ENCODE measurements at regions of chr12 and their contacts with region 1.

Region 1: DNA sequence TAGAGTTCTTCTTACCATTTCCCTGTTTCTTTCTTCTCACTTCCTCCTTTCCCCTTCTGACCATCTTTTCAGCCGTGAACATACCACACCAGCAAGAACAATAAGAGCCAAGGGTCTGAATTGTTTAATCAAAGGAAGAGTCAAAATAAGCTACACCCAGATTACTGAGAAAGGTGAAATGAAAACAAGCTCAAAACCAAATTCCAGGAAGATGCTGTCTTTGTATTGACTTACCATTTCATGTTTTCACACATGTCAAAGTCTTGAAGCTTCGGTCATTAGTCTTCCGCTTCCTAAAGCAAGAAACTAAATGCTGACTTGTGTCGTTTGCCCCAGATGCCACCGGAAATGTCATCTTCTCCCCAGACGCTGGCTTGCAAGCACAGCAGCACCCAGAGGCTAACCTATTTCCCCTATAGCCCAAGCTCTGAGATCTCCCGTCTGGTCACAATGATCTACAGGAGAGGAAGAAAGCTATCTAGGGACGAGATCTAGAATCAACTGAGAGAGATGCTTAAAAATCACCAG is 136.5 kb upstream of the AMIGO2 start:
- DNase-seq: peak; percentile 72
- H3K4me3 Mint-ChIP-seq: peak overlapping the region; percentile 93
- H3K27ac Mint-ChIP-seq: peak overlapping the region; percentile 96
- H3K4me1 Mint-ChIP-seq: peaks cover 63% of the 10 kb centered on the region
- H3K27me3 Mint-ChIP-seq: no peaks in the 10 kb centered on the region

Region 2: DNA sequence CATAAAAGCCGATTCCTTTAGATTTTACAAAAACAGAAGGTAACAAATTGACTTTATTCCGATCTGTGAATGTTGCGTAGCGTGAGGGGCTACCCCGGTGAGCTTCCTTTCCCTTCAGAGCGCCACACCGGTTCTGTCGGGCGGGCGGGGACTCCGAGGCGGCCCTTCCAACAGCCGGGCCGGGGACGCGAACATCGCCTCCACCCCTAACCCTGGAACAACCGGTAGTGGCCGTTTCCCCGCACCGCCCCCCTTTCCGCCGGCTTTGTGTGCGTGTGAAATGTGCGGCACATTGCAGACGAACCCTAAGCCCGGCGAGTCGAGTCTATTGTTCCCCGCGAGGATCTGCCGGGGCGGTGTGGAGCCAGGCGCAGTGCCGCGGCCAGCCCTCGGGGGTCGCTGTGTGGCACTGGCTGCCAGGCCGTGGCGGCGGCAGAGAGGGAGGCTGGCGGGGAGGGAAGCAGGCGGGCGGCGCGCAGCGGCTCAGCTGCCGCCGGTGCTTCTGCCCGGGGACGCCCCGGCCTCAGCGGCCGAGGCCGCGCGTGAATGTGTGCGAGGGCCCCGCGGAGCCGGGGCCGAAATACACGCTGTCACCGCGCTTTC is 1487.5 kb before region 1 on chr12:
- intact Hi-C with region 1: loop called (anchors 5 kb)
- DNase-seq: peak; percentile 96
- H3K4me3 Mint-ChIP-seq: peak overlapping the region; percentile 99
- H3K27ac Mint-ChIP-seq: peak overlapping the region; percentile 100
- H3K4me1 Mint-ChIP-seq: peaks cover 40% of the 10 kb centered on the region
- H3K27me3 Mint-ChIP-seq: no peaks in the 10 kb centered on the region

Region 3: GRCh38 chr12:46382964-46383653 is 833.1 kb before region 1 on chr12:
- intact Hi-C with region 1: loop called (anchors 5 kb)
- DNase-seq: peak; percentile 95
- H3K4me3 Mint-ChIP-seq: peak overlapping the region; percentile 84
- H3K27ac Mint-ChIP-seq: peak overlapping the region; percentile 92
- H3K4me1 Mint-ChIP-seq: peaks cover 54% of the 10 kb centered on the region
- H3K27me3 Mint-ChIP-seq: no peaks in the 10 kb centered on the region

Region 4: DNA sequence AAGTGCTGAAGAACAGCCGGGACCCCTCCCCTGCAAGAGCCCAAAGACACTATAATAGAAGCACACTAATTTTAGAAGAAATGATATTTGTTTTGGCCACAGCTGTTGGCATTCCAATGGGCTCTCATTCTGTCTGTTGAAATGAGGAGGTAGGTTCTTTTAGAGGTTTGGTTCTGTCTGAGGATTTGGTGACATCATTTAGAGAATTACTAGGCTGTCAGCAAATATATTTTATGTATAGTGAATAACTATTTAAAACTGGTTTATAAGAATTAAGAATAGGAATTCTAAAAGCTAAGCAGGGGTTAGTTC is 642.9 kb before region 1 on chr12:
- intact Hi-C with region 1: no loop called
- DNase-seq: no peak
- H3K4me3 Mint-ChIP-seq: no peak overlapping the region
- H3K27ac Mint-ChIP-seq: no peak overlapping the region
- H3K4me1 Mint-ChIP-seq: no peaks in the 10 kb centered on the region
- H3K27me3 Mint-ChIP-seq: no peaks in the 10 kb centered on the region

Region 5: DNA sequence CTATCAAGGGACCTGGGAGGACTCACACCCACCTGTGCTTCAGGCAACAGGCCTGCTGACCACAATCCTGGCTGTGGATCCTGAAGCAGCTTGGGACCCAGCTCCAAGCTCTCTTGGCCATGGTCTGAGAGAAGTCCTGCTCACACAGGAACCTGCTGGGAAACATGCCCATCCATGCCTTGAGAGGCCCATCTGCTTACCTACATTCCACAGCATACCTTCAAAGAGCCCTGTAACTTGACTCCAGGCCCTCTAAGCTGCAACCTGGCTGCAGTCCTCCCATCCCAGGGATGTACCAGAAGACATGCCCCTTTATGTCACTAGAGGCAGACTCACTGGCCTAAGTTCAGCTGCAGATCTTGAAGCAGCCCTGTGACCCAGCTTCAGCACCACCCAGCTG is 74.7 kb before region 1 on chr12:
- intact Hi-C with region 1: no loop called
- DNase-seq: no peak
- H3K4me3 Mint-ChIP-seq: no peak overlapping the region
- H3K27ac Mint-ChIP-seq: no peak overlapping the region
- H3K4me1 Mint-ChIP-seq: peaks cover 21% of the 10 kb centered on the region
- H3K27me3 Mint-ChIP-seq: no peaks in the 10 kb centered on the region

Region 6: DNA sequence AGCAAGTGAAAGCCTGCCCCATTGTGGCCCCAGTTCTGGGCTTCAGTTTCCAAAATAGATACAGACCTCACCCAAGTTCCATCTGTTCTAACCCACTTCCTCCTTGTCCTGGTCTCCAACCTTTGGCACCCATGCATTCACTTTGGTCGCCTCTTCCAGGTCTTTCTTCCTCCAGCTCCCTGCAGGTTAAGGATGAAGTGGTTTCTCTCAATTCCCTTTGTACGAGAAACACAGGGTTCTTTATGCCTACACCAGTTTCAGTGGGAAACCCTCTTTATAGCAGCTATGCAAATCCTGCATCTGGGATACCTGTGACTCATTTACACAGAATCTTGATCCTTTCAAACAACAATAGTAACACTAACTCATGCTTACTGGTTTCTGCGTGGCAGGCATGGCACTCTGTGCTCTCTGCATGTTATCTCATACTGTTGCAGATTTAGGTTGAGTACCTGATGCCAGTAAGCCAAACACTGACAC is 25.9 kb before region 1 on chr12:
- intact Hi-C with region 1: loop called (anchors 1 kb)
- DNase-seq: no peak
- H3K4me3 Mint-ChIP-seq: peak overlapping the region; percentile 24
- H3K27ac Mint-ChIP-seq: peak overlapping the region; percentile 71
- H3K4me1 Mint-ChIP-seq: peaks cover 69% of the 10 kb centered on the region
- H3K27me3 Mint-ChIP-seq: no peaks in the 10 kb centered on the region

Region 7: GRCh38 chr12:47307680-47308399 is 91.6 kb after region 1 on chr12:
- intact Hi-C with region 1: loop called (anchors 1 kb)
- DNase-seq: peak; percentile 43
- H3K4me3 Mint-ChIP-seq: peak overlapping the region; percentile 91
- H3K27ac Mint-ChIP-seq: peak overlapping the region; percentile 87
- H3K4me1 Mint-ChIP-seq: peaks cover 69% of the 10 kb centered on the region
- H3K27me3 Mint-ChIP-seq: no peaks in the 10 kb centered on the region

Region 8: GRCh38 chr12:47391566-47391965 is 175.4 kb after region 1 on chr12:
- intact Hi-C with region 1: loop called (anchors 1 kb)
- DNase-seq: peak; percentile 44
- H3K4me3 Mint-ChIP-seq: peak overlapping the region; percentile 27
- H3K27ac Mint-ChIP-seq: peak overlapping the region; percentile 100
- H3K4me1 Mint-ChIP-seq: peaks cover 89% of the 10 kb centered on the region
- H3K27me3 Mint-ChIP-seq: no peaks in the 10 kb centered on the region

Region 9: DNA sequence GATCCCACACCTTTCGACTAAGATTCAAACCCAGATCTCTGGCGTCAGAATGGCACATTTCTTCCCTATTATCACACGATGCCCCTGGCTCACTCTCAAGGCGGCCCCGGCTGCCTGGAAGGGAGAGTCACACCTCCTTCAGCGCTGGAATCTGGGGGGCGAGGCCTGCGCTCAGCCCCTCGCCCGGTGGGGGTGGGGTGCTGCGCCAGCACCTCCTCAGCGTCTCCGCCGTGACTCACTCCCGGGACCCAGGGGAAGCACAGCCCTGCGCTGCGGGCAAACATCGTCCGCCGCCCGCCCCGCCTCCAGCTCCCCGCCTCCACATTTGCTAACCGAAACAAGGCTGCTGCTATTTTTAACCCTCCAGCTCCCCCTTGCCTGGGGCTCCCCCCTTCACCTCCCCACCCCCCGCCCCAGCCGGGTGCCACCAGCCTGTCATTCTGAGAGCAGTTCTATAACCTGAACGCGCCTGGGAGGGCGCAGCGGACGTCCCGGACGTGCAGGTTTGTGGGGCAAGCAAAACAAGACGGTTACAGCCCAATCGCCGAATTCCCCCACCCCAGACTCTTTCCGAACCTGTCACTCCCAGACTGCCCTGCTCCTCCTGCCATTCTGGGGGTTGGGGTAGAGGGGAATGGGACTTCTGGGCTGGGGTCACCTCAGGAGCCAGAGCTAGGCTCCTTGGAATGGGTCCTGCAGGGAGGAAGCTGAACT is 596.7 kb after region 1 on chr12:
- intact Hi-C with region 1: loop called (anchors 5 kb)
- DNase-seq: peak; percentile 92
- H3K4me3 Mint-ChIP-seq: peak overlapping the region; percentile 96
- H3K27ac Mint-ChIP-seq: peak overlapping the region; percentile 98
- H3K4me1 Mint-ChIP-seq: peaks cover 92% of the 10 kb centered on the region
- H3K27me3 Mint-ChIP-seq: no peaks in the 10 kb centered on the region

Measured in activated T-helper 1 cell treated with anti-CD3 and anti-CD28 coated beads, Interleukin-12 subunit alpha, Interleukin-12 subunit beta, Interleukin-2, Interleukin-4 antibody, amounts not matched to agents 30 ng/mL and 10 ng/mL and 1 ng/mL, durations not matched to agents 14 hours and 24 hours and 36 hours (primary cell).